ENCODE measurements at regions of chr5 and their contacts with region 1.

Region 1: DNA sequence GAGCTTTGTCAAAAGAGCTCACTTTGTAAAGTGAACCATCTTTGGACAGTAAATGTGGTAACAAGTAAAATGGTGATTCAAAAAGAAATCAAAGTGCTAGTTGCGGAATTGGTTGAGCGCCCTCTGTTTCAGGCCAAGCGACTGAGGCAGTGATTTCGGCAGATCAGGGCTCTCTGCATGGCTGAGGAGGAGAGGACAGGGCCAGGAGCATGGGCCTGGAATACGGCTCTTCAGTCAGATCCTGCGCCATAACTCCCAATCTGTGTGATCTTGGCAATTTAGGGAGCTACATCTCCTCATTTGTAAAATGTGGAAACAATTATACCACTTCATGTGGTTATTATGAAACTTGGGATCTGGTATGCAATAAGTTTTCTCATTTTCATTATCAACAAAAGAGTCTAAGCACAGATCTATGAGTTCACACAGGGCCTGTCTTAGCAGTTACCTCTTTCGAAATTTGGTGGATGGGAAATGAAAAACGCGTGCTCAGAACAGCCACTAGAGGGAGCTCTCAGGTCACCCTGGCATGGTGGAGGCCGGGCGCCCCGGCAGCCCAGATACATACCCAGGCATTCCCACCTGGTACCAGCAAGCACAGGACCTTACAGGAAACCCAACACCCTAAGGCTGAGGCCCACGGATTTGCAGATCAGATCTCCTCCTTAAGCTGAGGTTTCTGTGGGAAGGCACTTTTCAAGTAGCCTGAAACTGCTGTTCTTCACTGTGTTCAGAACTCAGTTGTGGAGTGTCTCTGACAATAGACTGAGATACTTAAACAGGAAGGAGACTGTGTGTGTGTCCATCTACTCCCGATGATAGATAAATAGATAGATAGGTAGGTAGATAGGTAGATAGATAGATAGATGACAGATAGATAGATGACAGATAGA is 303.7 kb downstream of the RAB3C start:
- DNase-seq: peak; percentile 53 to 69 (median 67)
- H3K4me3 ChIP-seq: no peak overlapping the region
- H3K4me3 Mint-ChIP-seq: peak overlapping the region in 5 of 8 donors; percentile 4 to 65 (median 47)
- H3K27ac ChIP-seq: no peak overlapping the region
- H3K27ac Mint-ChIP-seq: peak overlapping the region in 6 of 7 donors; percentile 10 to 81 (median 78)
- H3K4me1 ChIP-seq: peaks cover 19% of the 10 kb centered on the region
- H3K4me1 Mint-ChIP-seq: peaks cover 15 to 33% (median 24%) of the 10 kb centered on the region in 4 donors
- H3K27me3 ChIP-seq: no peaks in the 10 kb centered on the region
- H3K27me3 Mint-ChIP-seq: peaks cover 3 to 4% of the 10 kb centered on the region in 2 donors

Region 2: DNA sequence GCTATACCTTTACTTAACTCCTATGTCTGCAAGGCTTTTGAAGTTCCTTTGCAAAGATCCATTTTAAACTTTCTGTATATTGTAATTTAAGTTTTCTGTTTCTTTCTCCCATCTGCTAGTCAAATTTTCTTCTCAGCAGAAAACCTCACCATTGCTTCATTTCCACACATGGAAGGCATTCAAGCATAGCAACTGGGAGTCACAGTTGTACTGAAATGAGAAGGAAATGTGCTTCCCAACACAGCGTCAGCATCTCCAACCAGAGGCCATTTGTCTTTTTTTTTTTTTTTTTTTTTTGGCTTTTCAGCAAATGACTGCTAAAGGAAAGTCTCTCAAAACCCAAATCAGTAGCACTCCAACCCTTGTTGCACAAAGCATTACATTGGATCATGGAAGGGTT is 211.2 kb before region 1 on chr5:
- CTCF ChIA-PET with region 1: no interaction called
- POLR2A ChIA-PET with region 1: no interaction called
- intact Hi-C with region 1: no loop called
- DNase-seq: no peak
- H3K4me3 ChIP-seq: no peak overlapping the region
- H3K4me3 Mint-ChIP-seq: no peak overlapping the region
- H3K27ac ChIP-seq: no peak overlapping the region
- H3K27ac Mint-ChIP-seq: no peak overlapping the region
- H3K4me1 ChIP-seq: no peaks in the 10 kb centered on the region
- H3K4me1 Mint-ChIP-seq: no peaks in the 10 kb centered on the region
- H3K27me3 ChIP-seq: peaks cover 4% of the 10 kb centered on the region
- H3K27me3 Mint-ChIP-seq: peaks cover 1 to 2% of the 10 kb centered on the region in 2 donors

Region 3: DNA sequence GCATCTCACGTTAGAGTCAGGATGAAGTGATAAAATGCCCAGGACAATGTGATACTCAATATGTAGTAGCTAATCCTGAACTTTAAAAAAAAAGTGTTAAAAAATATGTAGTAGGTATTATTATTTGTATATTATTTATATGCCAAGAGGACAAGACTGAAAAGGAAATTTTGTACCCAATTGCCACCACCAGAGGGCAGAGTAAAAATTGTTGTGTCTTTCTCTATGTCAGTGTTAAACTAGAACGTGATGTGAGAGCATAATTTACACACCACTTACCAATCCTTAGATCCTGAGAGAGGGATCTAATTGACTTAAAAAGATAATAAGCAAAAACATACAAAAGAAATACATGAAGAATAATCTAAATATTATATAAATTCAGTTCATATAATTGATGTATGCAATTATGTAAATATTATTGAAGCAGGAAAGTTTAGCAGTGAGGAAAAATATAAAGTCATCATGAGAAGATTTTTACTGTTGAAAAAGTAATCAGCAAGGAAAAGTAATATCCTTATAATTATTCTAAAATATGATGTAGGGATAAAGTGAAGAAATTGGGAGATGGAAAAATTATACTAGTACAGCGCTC is 14.8 kb before region 1 on chr5:
- CTCF ChIA-PET with region 1: interaction called, 41 read pairs
- POLR2A ChIA-PET with region 1: no interaction called
- intact Hi-C with region 1: no loop called
- DNase-seq: peak in 4 of 5 donors; percentile 5 to 32 (median 26)
- H3K4me3 ChIP-seq: no peak overlapping the region
- H3K4me3 Mint-ChIP-seq: no peak overlapping the region
- H3K27ac ChIP-seq: no peak overlapping the region
- H3K27ac Mint-ChIP-seq: no peak overlapping the region
- H3K4me1 ChIP-seq: no peaks in the 10 kb centered on the region
- H3K4me1 Mint-ChIP-seq: no peaks in the 10 kb centered on the region
- H3K27me3 ChIP-seq: no peaks in the 10 kb centered on the region
- H3K27me3 Mint-ChIP-seq: peaks cover 10 to 11% of the 10 kb centered on the region in 2 donors

Region 4: DNA sequence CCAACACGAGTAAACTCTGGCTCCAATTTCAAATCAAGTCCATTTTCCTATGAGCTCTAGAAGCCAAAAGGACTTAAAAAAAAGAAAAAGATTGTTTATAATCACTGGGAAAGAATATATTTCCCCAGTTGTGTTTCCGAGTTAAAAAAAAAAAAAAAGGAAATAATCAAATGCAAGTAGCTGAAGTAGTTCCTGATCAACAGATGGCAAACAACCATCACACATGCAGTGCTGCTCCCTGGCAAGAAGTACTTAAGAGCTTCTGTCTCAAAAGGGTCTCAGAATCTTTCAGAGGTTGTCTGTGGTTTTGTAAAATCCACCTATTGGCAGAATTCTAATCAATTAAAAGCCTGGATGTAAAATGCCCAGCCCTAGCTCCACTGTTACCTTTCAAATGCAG is 84.2 kb after region 1 on chr5:
- CTCF ChIA-PET with region 1: interaction called, 18 read pairs
- POLR2A ChIA-PET with region 1: no interaction called
- intact Hi-C with region 1: no loop called
- DNase-seq: no peak
- H3K4me3 ChIP-seq: no peak overlapping the region
- H3K4me3 Mint-ChIP-seq: no peak overlapping the region
- H3K27ac ChIP-seq: no peak overlapping the region
- H3K27ac Mint-ChIP-seq: no peak overlapping the region
- H3K4me1 ChIP-seq: no peaks in the 10 kb centered on the region
- H3K4me1 Mint-ChIP-seq: peaks cover 0 to 2% (median 0%) of the 10 kb centered on the region in 4 donors
- H3K27me3 ChIP-seq: no peaks in the 10 kb centered on the region
- H3K27me3 Mint-ChIP-seq: no peaks in the 10 kb centered on the region

Region 5: GRCh38 chr5:59039296-59040023 is 152.9 kb after region 1 on chr5:
- CTCF ChIA-PET with region 1: interaction called, 10 read pairs
- POLR2A ChIA-PET with region 1: no interaction called
- intact Hi-C with region 1: loop called (anchors 10 kb)
- DNase-seq: peak; percentile 90 to 94 (median 91)
- H3K4me3 ChIP-seq: peak overlapping the region; percentile 84 to 93
- H3K4me3 Mint-ChIP-seq: peak overlapping the region; percentile 89 to 98 (median 96)
- H3K27ac ChIP-seq: peak overlapping the region; percentile 81
- H3K27ac Mint-ChIP-seq: peak overlapping the region; percentile 96 to 99 (median 99)
- H3K4me1 ChIP-seq: peaks cover 64% of the 10 kb centered on the region
- H3K4me1 Mint-ChIP-seq: peaks cover 39 to 79% (median 53%) of the 10 kb centered on the region in 4 donors
- H3K27me3 ChIP-seq: no peaks in the 10 kb centered on the region
- H3K27me3 Mint-ChIP-seq: no peaks in the 10 kb centered on the region

Region 6: GRCh38 chr5:59367791-59368394 is 481.3 kb after region 1 on chr5:
- CTCF ChIA-PET with region 1: interaction called, 12 read pairs
- POLR2A ChIA-PET with region 1: no interaction called
- intact Hi-C with region 1: loop called (anchors 2 kb)
- DNase-seq: peak in 4 of 5 donors; percentile 22 to 33 (median 28)
- H3K4me3 ChIP-seq: no peak overlapping the region
- H3K4me3 Mint-ChIP-seq: no peak overlapping the region
- H3K27ac ChIP-seq: no peak overlapping the region
- H3K27ac Mint-ChIP-seq: no peak overlapping the region
- H3K4me1 ChIP-seq: no peaks in the 10 kb centered on the region
- H3K4me1 Mint-ChIP-seq: peaks cover 0 to 2% (median under 1%) of the 10 kb centered on the region in 4 donors
- H3K27me3 ChIP-seq: no peaks in the 10 kb centered on the region
- H3K27me3 Mint-ChIP-seq: peaks cover 11 to 14% of the 10 kb centered on the region in 2 donors

Region 7: GRCh38 chr5:59799668-59800346 is 913.2 kb after region 1 on chr5:
- CTCF ChIA-PET with region 1: no interaction called
- POLR2A ChIA-PET with region 1: no interaction called
- intact Hi-C with region 1: loop called (anchors 5 kb)
- DNase-seq: peak in 4 of 5 donors; percentile 38 to 45 (median 43)
- H3K4me3 ChIP-seq: no peak overlapping the region
- H3K4me3 Mint-ChIP-seq: no peak overlapping the region
- H3K27ac ChIP-seq: no peak overlapping the region
- H3K27ac Mint-ChIP-seq: no peak overlapping the region
- H3K4me1 ChIP-seq: peaks cover 15% of the 10 kb centered on the region
- H3K4me1 Mint-ChIP-seq: no peaks in the 10 kb centered on the region
- H3K27me3 ChIP-seq: no peaks in the 10 kb centered on the region
- H3K27me3 Mint-ChIP-seq: peaks cover 2 to 3% of the 10 kb centered on the region in 2 donors

Measured in CD4-positive, alpha-beta memory T cell (primary cell).